Breast epithelium (tissue), 4 donors: ENCODE measurements at regions of chr1 and their contacts with region 1.

Region 1: GRCh38 chr1:85718678-85719340 is 10.6 kb upstream of the ZNHIT6 start:
- DNase-seq: no peak
- H3K4me3 ChIP-seq: no peak overlapping the region
- H3K27ac ChIP-seq: no peak overlapping the region
- H3K4me1 ChIP-seq: no peaks in the 10 kb centered on the region
- H3K27me3 ChIP-seq: no peaks in the 10 kb centered on the region
- CTCF ChIP-seq: no peak
- POLR2A ChIP-seq: no peak

Region 2: GRCh38 chr1:85705940-85706339 is 12.9 kb before region 1 on chr1:
- intact Hi-C with region 1: loop called (anchors 1 kb)
- DNase-seq: no peak
- H3K4me3 ChIP-seq: no peak overlapping the region
- H3K27ac ChIP-seq: no peak overlapping the region
- H3K4me1 ChIP-seq: peaks cover 0 to 10% of the 10 kb centered on the region in 2 donors
- H3K27me3 ChIP-seq: no peaks in the 10 kb centered on the region
- CTCF ChIP-seq: no peak
- POLR2A ChIP-seq: no peak

Region 3: GRCh38 chr1:86101616-86102015 is 382.8 kb after region 1 on chr1:
- intact Hi-C with region 1: no loop called
- DNase-seq: no peak
- H3K4me3 ChIP-seq: no peak overlapping the region
- H3K27ac ChIP-seq: no peak overlapping the region
- H3K4me1 ChIP-seq: no peaks in the 10 kb centered on the region
- H3K27me3 ChIP-seq: no peaks in the 10 kb centered on the region
- CTCF ChIP-seq: no peak
- POLR2A ChIP-seq: no peak

Region 4: DNA sequence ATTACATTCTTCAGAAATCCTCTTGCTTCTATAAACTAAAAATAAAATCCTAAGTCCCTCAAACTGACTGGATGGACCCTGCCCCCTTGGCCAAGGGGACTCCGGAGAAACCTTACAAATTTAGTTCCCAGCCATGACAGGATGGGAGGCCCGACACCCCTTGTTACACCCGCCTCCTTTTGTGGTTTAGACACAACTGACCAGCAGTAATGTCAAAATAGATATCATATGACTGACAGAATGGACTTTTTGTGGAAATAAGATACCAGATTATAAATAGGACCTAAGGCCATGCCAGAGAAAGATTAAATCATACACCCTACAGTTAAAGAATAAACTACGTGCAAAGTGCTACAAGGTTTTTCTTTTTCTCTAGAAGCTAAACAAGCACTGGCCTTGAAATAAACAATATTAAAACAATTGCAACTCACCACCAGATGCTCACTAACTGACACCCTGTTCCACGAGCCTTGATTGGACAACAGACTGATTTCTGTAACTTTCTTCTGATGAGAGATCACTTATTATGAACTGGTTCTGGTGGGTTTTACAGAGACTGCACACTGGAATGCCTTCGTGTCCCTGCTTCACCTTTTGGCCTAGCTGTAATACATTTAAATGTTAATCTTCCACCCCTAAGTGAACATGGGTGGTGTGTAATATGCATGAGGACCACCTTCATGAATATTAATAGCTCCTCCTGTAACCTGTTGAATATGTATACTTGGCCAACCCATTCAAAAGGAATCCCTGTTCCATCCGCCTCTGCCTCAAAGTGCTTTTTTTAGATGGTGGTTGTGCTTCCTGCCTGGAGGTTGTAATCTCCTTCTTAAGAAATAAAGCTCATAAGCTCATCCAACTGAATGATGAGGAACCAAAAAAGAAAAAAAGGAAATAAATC is 577.7 kb after region 1 on chr1:
- intact Hi-C with region 1: no loop called
- DNase-seq: no peak
- H3K4me3 ChIP-seq: no peak overlapping the region
- H3K27ac ChIP-seq: no peak overlapping the region
- H3K4me1 ChIP-seq: no peaks in the 10 kb centered on the region
- H3K27me3 ChIP-seq: no peaks in the 10 kb centered on the region
- CTCF ChIP-seq: no peak
- POLR2A ChIP-seq: no peak

Region 5: GRCh38 chr1:86926883-86927282 is 1208.1 kb after region 1 on chr1:
- intact Hi-C with region 1: no loop called
- DNase-seq: no peak
- H3K4me3 ChIP-seq: no peak overlapping the region
- H3K27ac ChIP-seq: no peak overlapping the region
- H3K4me1 ChIP-seq: no peaks in the 10 kb centered on the region
- H3K27me3 ChIP-seq: no peaks in the 10 kb centered on the region
- CTCF ChIP-seq: no peak
- POLR2A ChIP-seq: no peak